HepG2 (cell line): ENCODE measurements at regions of chr14 and their contacts with region 1.

Region 1: GRCh38 chr14:34023824-34024767 is 73.2 kb upstream of the EGLN3 start:
- DNase-seq: peak; percentile 100
- ATAC-seq: peak; percentile 96
- H3K4me3 ChIP-seq: peak overlapping the region; percentile 26 to 60 (median 58)
- H3K27ac ChIP-seq: peak overlapping the region; percentile 92
- H3K4me1 ChIP-seq: peaks cover 68% of the 10 kb centered on the region
- H3K27me3 ChIP-seq: no peaks in the 10 kb centered on the region
- CTCF ChIP-seq: peak; percentile 69
- EP300 ChIP-seq: peak; percentile 99
- POLR2A ChIP-seq: peak; percentile 34 to 58; a peak in 2 of 4 replicates
- RAD21 ChIP-seq: peak; percentile 66

Region 2: GRCh38 chr14:33950320-33951182 is 73.5 kb before region 1 on chr14 and contains the start of gene EGLN3:
- CTCF ChIA-PET with region 1: no interaction called
- POLR2A ChIA-PET with region 1: interaction called, 7 read pairs
- in situ Hi-C with region 1: no loop called
- intact Hi-C with region 1: loop called (anchors 2 kb)
- DNase-seq: peak; percentile 55
- ATAC-seq: peak; percentile 97
- H3K4me3 ChIP-seq: peak within 1 kb of the TSS; percentile 38 to 78 (median 58)
- H3K27ac ChIP-seq: peak within 1 kb of the TSS; percentile 1
- H3K4me1 ChIP-seq: peaks cover 9% of the 10 kb centered on the region
- H3K27me3 ChIP-seq: peaks cover 0 to 43% of the 10 kb centered on the region in 2 experiments; a peak in 3 of 5 replicates
- CTCF ChIP-seq: no peak
- EP300 ChIP-seq: no peak
- POLR2A ChIP-seq: peak in 1 of 2 experiments; percentile 100; a peak in 2 of 4 replicates
- RAD21 ChIP-seq: no peak
- total RNA-seq, gene EGLN3: 0.18 TPM in 2 replicates

Region 3: GRCh38 chr14:33962016-33962415 is 62.1 kb before region 1 on chr14:
- CTCF ChIA-PET with region 1: no interaction called
- POLR2A ChIA-PET with region 1: no interaction called
- in situ Hi-C with region 1: no loop called
- intact Hi-C with region 1: no loop called
- DNase-seq: no peak
- ATAC-seq: no peak
- H3K4me3 ChIP-seq: no peak overlapping the region
- H3K27ac ChIP-seq: no peak overlapping the region
- H3K4me1 ChIP-seq: no peaks in the 10 kb centered on the region
- H3K27me3 ChIP-seq: peaks cover 2 to 16% of the 10 kb centered on the region in 2 experiments; a peak in 3 of 5 replicates
- CTCF ChIP-seq: no peak
- EP300 ChIP-seq: no peak
- POLR2A ChIP-seq: no peak
- RAD21 ChIP-seq: no peak

Region 4: GRCh38 chr14:34035177-34035933 is 11.3 kb after region 1 on chr14:
- CTCF ChIA-PET with region 1: no interaction called
- POLR2A ChIA-PET with region 1: interaction called, 72 read pairs
- in situ Hi-C with region 1: no loop called
- intact Hi-C with region 1: loop called (anchors 1 kb)
- DNase-seq: peak; percentile 95
- ATAC-seq: peak; percentile 93
- H3K4me3 ChIP-seq: peak overlapping the region; percentile 20 to 65 (median 24); a peak in 5 of 6 replicates
- H3K27ac ChIP-seq: peak overlapping the region; percentile 78
- H3K4me1 ChIP-seq: peaks cover 92% of the 10 kb centered on the region
- H3K27me3 ChIP-seq: no peaks in the 10 kb centered on the region
- CTCF ChIP-seq: peak; percentile 53
- EP300 ChIP-seq: peak in 1 of 2 experiments; percentile 84; a peak in 3 of 4 replicates
- POLR2A ChIP-seq: peak; percentile 59 to 60
- RAD21 ChIP-seq: no peak; the same call in 1 of the 2 replicates

Region 5: DNA sequence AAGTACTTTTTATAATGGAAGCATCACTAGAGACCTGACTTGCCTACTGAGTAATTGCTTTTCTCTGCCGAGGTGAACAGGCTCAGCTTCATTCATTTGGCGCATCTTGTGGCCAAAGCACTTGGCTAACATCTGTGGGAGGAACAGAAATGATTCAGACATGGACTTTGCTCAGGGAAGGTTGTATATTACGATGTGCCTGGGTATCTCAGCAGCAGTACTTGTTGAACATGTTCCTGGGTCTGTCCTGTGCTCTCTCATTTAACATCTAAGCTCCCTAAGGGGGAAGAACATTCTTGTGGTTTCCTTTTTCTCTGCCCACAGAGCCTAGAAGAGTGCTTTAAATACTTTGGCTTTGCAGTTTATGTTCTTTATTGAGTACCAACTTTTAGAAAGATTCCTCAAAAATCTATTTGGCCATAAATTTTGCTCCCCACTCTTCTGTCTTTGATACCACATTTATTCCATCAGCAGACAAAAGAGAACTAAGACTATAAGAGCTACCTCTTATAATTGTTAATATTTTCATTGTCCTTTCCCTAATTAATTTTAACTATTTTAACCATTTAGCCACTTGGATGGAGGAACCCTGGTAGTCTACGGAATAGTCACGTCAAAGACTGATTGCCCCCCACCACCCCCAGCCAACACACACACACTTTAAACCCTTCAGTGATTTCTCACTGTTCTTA is 28.0 kb after region 1 on chr14:
- CTCF ChIA-PET with region 1: no interaction called
- POLR2A ChIA-PET with region 1: interaction called, 17 read pairs
- in situ Hi-C with region 1: no loop called
- intact Hi-C with region 1: loop called (anchors 1 kb)
- DNase-seq: peak; percentile 95
- ATAC-seq: peak; percentile 94
- H3K4me3 ChIP-seq: no peak overlapping the region; a peak in 1 of 6 replicates
- H3K27ac ChIP-seq: no peak overlapping the region
- H3K4me1 ChIP-seq: peaks cover 73% of the 10 kb centered on the region
- H3K27me3 ChIP-seq: peaks cover 0 to 2% of the 10 kb centered on the region in 2 experiments; a peak in 1 of 5 replicates
- CTCF ChIP-seq: no peak
- EP300 ChIP-seq: peak in 1 of 2 experiments; percentile 74; a peak in 1 of 4 replicates
- POLR2A ChIP-seq: peak in 1 of 2 experiments; percentile 72; a peak in 2 of 4 replicates
- RAD21 ChIP-seq: no peak

Region 6: DNA sequence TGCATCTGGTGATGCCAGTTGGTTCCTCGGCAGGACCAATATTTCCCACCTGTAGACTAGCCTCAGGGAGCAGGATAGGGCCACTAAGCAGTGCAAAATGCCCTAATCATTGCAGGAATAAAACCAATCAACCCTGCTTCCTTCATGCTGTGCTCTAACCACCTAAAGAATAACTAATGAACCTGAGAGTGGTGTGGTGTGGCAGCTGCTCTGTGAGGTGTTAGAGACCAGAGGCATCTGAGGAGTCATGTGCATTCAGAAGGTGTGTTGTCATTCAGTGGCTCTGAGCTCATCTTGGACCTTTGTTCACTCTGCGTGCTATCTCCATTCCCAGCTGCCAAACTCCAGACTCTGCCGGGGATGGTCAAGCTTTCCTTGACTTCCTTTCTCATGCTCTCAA is 63.5 kb after region 1 on chr14:
- CTCF ChIA-PET with region 1: no interaction called
- POLR2A ChIA-PET with region 1: no interaction called
- in situ Hi-C with region 1: no loop called
- intact Hi-C with region 1: loop called (anchors 2 kb)
- DNase-seq: no peak
- ATAC-seq: peak; percentile 39; the same call in 2 of the 3 replicates
- H3K4me3 ChIP-seq: no peak overlapping the region
- H3K27ac ChIP-seq: no peak overlapping the region
- H3K4me1 ChIP-seq: peaks cover 1% of the 10 kb centered on the region; the same call in 1 of the 2 replicates
- H3K27me3 ChIP-seq: peaks cover 0 to 12% of the 10 kb centered on the region in 2 experiments; a peak in 2 of 5 replicates
- CTCF ChIP-seq: no peak
- EP300 ChIP-seq: no peak
- POLR2A ChIP-seq: no peak
- RAD21 ChIP-seq: no peak

Region 7: GRCh38 chr14:34461334-34462131 is 437.4 kb after region 1 on chr14:
- CTCF ChIA-PET with region 1: no interaction called
- POLR2A ChIA-PET with region 1: no interaction called
- in situ Hi-C with region 1: loop called (anchors 25 kb)
- intact Hi-C with region 1: loop called (anchors 10 kb)
- DNase-seq: peak; percentile 89
- ATAC-seq: peak; percentile 75
- H3K4me3 ChIP-seq: peak overlapping the region; percentile 68 to 94 (median 73)
- H3K27ac ChIP-seq: peak overlapping the region; percentile 77
- H3K4me1 ChIP-seq: peaks cover 72% of the 10 kb centered on the region
- H3K27me3 ChIP-seq: no peaks in the 10 kb centered on the region; a peak in 1 of 5 replicates
- CTCF ChIP-seq: 0 out of 2 replicates have a peak, but pooled peaks have one; percentile 23
- EP300 ChIP-seq: no peak; a peak in 2 of 4 replicates
- POLR2A ChIP-seq: peak in 1 of 2 experiments; percentile 86; a peak in 2 of 4 replicates
- RAD21 ChIP-seq: no peak; the same call in 1 of the 2 replicates